ENCODE measurements at regions of chr18 and their contacts with region 1.

Region 1: DNA sequence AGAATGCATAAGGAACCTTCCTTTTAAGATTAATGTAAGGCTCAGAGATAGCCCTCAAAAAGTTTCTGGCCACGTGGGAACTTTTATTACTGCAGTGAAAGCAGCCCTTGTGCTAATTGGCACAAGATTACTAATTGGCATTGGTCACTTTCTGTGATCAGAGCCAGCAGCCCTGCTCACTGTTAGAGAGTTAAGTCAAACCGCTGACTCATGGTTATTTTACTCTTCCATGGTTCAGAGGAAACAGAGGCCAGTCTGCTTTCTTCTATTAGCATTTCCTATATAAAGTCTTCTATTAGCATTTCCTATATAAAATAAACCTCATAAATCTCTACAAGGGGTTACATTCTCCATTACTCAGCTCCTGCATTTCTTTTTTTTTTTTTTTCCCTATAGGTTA is 1.5 kb upstream of the SLC35G4 start:
- DNase-seq: no peak
- H3K4me3 ChIP-seq: no peak overlapping the region
- H3K27ac ChIP-seq: no peak overlapping the region
- H3K4me1 ChIP-seq: no peaks in the 10 kb centered on the region
- H3K27me3 ChIP-seq: peaks cover 6% of the 10 kb centered on the region
- CTCF ChIP-seq: no peak

Region 2: DNA sequence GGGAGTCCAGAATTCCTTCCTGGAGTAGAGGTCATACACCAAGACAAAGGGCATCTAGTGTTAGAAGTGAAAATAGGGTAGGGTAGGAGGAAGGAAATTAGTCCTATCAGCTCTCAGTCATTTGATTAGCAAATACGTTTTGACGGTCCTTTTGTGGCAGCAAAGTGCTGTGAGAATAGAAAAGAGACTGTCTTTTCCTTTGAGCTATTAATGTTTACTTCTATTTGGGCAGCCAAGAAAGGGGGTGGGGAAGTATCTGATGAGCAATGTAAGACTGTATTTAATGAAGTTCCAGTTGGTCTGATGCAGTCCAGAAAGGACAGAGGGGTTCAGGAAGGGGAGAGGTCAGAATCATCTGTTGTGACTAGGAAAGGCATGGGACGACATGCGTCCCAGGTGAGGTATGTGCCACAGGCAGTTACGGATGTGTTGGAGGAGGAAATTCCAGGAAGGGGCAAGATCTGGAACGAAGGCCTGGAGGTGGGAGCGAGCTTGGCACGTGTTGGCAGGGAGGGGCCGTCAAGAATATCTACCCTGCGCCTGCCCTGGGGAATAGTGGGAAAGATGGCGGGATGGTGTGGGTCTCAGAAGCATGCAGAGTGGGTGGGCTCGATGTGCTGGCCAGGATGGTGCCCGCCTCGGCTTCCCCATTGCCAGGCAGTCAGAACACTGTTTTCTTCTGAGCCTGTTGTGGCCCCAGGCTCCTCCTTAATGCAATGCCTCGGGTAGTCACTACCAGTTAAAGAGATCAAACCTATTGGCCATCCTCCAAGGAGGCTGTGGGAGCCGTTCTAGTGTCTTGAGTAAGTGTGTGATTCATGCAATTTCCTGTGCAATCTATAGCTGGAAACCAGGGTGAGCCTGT is 1780.0 kb before region 1 on chr18:
- CTCF ChIA-PET with region 1: no interaction called
- POLR2A ChIA-PET with region 1: no interaction called
- intact Hi-C with region 1: loop called (anchors 10 kb)
- DNase-seq: peak; percentile 97
- H3K4me3 ChIP-seq: no peak overlapping the region
- H3K27ac ChIP-seq: peak overlapping the region; percentile 70
- H3K4me1 ChIP-seq: peaks cover 32% of the 10 kb centered on the region
- H3K27me3 ChIP-seq: no peaks in the 10 kb centered on the region
- CTCF ChIP-seq: no peak

Region 3: DNA sequence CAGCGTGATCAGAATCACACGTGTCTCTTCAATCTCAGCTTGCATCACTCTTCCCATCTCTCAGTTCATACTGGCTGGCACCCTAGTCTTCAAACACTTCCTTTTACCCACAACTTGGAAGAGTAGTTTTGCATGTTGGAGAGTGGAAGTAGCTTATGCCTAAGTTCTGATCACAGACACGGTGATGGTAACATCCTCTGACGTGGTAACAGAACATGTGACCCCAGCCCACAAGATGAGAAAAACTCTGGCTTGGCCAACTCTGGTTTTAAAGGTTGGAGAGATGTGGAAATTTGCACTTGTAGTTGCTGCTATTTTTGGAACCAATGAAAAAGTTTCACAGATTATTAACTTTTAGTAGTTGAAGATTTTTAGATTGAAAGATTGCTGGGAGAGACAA is 153.9 kb before region 1 on chr18:
- CTCF ChIA-PET with region 1: no interaction called
- POLR2A ChIA-PET with region 1: no interaction called
- intact Hi-C with region 1: no loop called
- DNase-seq: no peak
- H3K4me3 ChIP-seq: no peak overlapping the region
- H3K27ac ChIP-seq: no peak overlapping the region
- H3K4me1 ChIP-seq: no peaks in the 10 kb centered on the region
- H3K27me3 ChIP-seq: no peaks in the 10 kb centered on the region
- CTCF ChIP-seq: no peak

Region 4: GRCh38 chr18:11500153-11501122 is 107.5 kb before region 1 on chr18:
- CTCF ChIA-PET with region 1: no interaction called
- POLR2A ChIA-PET with region 1: no interaction called
- intact Hi-C with region 1: no loop called
- DNase-seq: no peak
- H3K4me3 ChIP-seq: no peak overlapping the region
- H3K27ac ChIP-seq: no peak overlapping the region
- H3K4me1 ChIP-seq: no peaks in the 10 kb centered on the region
- H3K27me3 ChIP-seq: peaks cover 9% of the 10 kb centered on the region
- CTCF ChIP-seq: no peak